ENCODE measurements at regions of chr15 and their contacts with region 1.

Region 1: DNA sequence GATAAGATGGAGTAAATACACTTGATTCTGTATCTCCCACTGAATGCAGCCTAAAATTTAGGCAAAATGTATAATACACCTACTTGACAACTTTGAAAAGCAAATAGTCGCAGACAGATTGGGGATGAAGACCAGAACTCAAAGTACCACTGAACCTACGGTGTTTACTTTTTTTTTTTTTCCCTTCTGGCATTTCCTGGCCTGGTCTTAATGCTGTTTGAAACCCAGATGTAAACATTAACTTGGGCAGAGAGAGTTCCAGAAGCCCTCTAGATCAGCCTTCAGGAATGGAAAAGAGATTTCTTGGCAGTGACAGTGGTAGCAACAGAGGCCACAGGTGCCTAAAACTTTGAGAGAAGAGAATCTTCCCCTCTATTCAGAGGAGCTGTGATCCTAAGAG is 27.8 kb downstream of the ALPK3 start:
- DNase-seq: no peak
- H3K4me3 Mint-ChIP-seq: no peak overlapping the region
- H3K27ac Mint-ChIP-seq: no peak overlapping the region
- H3K4me1 Mint-ChIP-seq: no peaks in the 10 kb centered on the region
- H3K27me3 Mint-ChIP-seq: peaks cover 15% of the 10 kb centered on the region

Region 2: DNA sequence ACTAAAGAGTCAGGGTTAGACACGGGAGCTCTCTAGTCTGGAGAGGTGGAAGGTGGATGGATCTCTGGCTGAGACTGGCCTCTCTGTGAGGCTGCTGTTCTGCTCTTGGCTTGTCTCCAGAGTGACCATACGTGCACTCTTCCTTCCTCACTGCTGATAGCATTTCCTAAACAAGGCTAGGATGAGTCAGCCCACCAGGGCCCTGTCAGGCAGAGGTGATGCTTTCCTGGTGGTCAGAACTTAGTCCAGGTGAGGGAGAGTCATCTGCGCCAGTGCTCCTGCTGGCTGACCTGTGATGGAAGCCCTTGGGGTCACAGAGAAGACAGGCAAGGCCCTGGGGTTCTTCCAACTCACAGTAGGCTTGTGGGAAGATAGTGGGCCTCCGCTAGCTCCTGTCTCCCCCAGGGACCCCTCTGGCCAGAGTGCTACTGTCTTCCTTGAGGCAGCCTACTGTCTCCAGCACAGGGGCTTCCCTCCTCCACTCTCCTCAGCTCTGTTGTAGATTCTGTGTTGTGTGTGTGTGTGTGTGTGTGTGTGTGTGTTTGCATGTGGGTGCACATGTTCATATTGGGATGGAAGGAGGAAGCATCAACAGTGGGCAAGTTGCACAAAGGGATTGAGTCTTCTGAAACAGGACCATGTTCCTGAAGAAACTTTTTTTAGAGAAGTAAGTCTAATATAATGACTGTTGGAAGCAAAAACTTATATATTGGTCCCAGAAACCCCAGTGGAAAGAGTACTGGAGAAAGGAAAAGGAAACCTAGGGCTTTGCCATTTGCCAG is 11.3 kb before region 1 on chr15:
- CTCF ChIA-PET with region 1: interaction called, 12 read pairs
- DNase-seq: no peak
- H3K4me3 Mint-ChIP-seq: no peak overlapping the region
- H3K27ac Mint-ChIP-seq: no peak overlapping the region
- H3K4me1 Mint-ChIP-seq: no peaks in the 10 kb centered on the region
- H3K27me3 Mint-ChIP-seq: peaks cover 36% of the 10 kb centered on the region

Region 3: GRCh38 chr15:84929744-84930371 is 84.9 kb after region 1 on chr15:
- CTCF ChIA-PET with region 1: interaction called, 12 read pairs
- DNase-seq: no peak
- H3K4me3 Mint-ChIP-seq: no peak overlapping the region
- H3K27ac Mint-ChIP-seq: no peak overlapping the region
- H3K4me1 Mint-ChIP-seq: peaks cover 5% of the 10 kb centered on the region
- H3K27me3 Mint-ChIP-seq: peaks cover 11% of the 10 kb centered on the region